Head of caudate nucleus (tissue), 42 donors: ENCODE measurements at regions of chrX and their contacts with region 1.

Region 1: GRCh38 chrX:74421036-74421739 is at the start of gene SLC16A2:
- DNase-seq: peak; percentile 26 to 90 (median 75)

Region 2: GRCh38 chrX:74536152-74536831 is 115.1 kb after region 1 on chrX:
- intact Hi-C with region 1: loop called (anchors 10 kb)
- DNase-seq: peak; percentile 25 to 79 (median 58)